ENCODE measurements at regions of chr4 and their contacts with region 1.

Region 1: GRCh38 chr4:86497980-86498862 is 95.9 kb upstream of the PTPN13 start:
- DNase-seq: no peak
- H3K4me3 ChIP-seq: no peak overlapping the region
- H3K27ac ChIP-seq: no peak overlapping the region
- H3K4me1 ChIP-seq: peaks cover 0 to 5% (median 0%) of the 10 kb centered on the region in 4 donors
- H3K27me3 ChIP-seq: no peaks in the 10 kb centered on the region
- CTCF ChIP-seq: peak; percentile 53 to 77 (median 73)
- EP300 ChIP-seq: no peak
- POLR2A ChIP-seq: no peak

Region 2: GRCh38 chr4:86122404-86122803 is 375.8 kb before region 1 on chr4:
- intact Hi-C with region 1: no loop called
- DNase-seq: no peak
- H3K4me3 ChIP-seq: no peak overlapping the region
- H3K27ac ChIP-seq: no peak overlapping the region
- H3K4me1 ChIP-seq: peaks cover 0 to 7% (median 2%) of the 10 kb centered on the region in 4 donors
- H3K27me3 ChIP-seq: no peaks in the 10 kb centered on the region
- CTCF ChIP-seq: no peak
- EP300 ChIP-seq: no peak
- POLR2A ChIP-seq: no peak

Region 3: GRCh38 chr4:86593688-86594558 is 95.7 kb after region 1 on chr4 and contains the start of gene PTPN13:
- intact Hi-C with region 1: loop called (anchors 10 kb)
- DNase-seq: peak; percentile 98
- H3K4me3 ChIP-seq: peak within 1 kb of the TSS; percentile 62 to 89 (median 71)
- H3K27ac ChIP-seq: peak within 1 kb of the TSS; percentile 78 to 91 (median 83)
- H3K4me1 ChIP-seq: peaks cover 0 to 52% (median 35%) of the 10 kb centered on the region in 4 donors
- H3K27me3 ChIP-seq: peaks cover 0 to 4% (median 0%) of the 10 kb centered on the region in 4 donors
- CTCF ChIP-seq: no peak
- EP300 ChIP-seq: no peak
- POLR2A ChIP-seq: no peak
- total RNA-seq, gene PTPN13: 7.9 to 13.7 (median 9.4) TPM

Region 4: GRCh38 chr4:86895692-86896488 is 397.7 kb after region 1 on chr4:
- intact Hi-C with region 1: loop called (anchors 2 kb)
- DNase-seq: no peak
- H3K4me3 ChIP-seq: no peak overlapping the region
- H3K27ac ChIP-seq: no peak overlapping the region
- H3K4me1 ChIP-seq: peaks cover 2 to 20% (median 14%) of the 10 kb centered on the region in 4 donors
- H3K27me3 ChIP-seq: no peaks in the 10 kb centered on the region
- CTCF ChIP-seq: peak; percentile 67 to 71 (median 71)
- EP300 ChIP-seq: no peak
- POLR2A ChIP-seq: no peak

Region 5: GRCh38 chr4:87093443-87094123 is 595.4 kb after region 1 on chr4:
- intact Hi-C with region 1: no loop called
- DNase-seq: no peak
- H3K4me3 ChIP-seq: no peak overlapping the region
- H3K27ac ChIP-seq: peak overlapping the region; percentile 27 to 58 (median 48)
- H3K4me1 ChIP-seq: peaks cover 25 to 56% (median 41%) of the 10 kb centered on the region in 4 donors
- H3K27me3 ChIP-seq: no peaks in the 10 kb centered on the region
- CTCF ChIP-seq: peak; percentile 49 to 68 (median 63)
- EP300 ChIP-seq: no peak
- POLR2A ChIP-seq: no peak

Measured in esophagus muscularis mucosa (tissue), 4 donors.